ENCODE measurements at regions of chr12 and their contacts with region 1.

Region 1: DNA sequence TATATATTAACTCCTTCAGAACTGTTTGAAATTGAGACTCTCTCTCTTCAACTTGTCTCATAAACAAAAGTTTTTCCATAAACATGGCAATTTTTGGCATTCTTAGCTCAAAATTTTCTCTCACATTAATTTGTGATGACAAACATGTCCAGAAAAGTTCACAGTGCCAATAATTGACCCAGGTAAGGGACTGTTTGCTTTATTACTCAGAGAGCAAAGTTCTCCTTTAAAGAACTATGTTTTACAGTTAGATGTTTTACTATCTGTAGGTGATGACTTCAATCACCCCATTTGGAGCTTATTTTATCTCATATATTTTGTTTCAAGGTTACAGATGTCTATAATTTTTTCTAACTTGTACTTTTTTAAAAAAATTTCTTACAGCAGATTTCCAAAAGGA is 855.6 kb downstream of the SLC16A7 start:
- DNase-seq: no peak
- ATAC-seq: no peak

Region 2: DNA sequence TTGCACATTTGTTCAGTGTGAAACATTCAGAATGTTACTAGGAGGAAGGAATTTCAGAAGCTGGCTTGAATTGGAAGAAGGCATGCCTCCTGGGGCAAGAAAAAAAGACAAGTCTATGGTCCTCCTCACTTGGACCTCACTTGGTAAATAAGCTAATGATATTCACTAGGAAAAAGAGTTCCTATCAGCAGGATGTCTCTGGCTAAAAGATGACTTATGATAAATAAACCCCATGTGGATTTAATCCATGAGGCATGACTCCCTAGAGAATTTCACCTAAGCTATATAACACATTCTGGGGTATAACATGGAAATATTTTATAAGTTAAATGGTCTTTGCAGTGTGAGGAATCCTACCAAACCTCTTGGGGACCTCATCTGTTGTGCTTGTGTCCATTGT is 1731.0 kb before region 1 on chr12:
- intact Hi-C with region 1: loop called (anchors 5 kb)
- DNase-seq: no peak
- ATAC-seq: no peak

Region 3: GRCh38 chr12:59620326-59620725 is 831.1 kb before region 1 on chr12:
- intact Hi-C with region 1: loop called (anchors 5 kb)
- DNase-seq: no peak
- ATAC-seq: peak; percentile 30

Region 4: GRCh38 chr12:60616400-60616799 is 164.9 kb after region 1 on chr12:
- intact Hi-C with region 1: no loop called
- DNase-seq: no peak
- ATAC-seq: no peak